Colonic mucosa (tissue), 4 donors: ENCODE measurements at regions of chr11 and their contacts with region 1.

Region 1: GRCh38 chr11:123301696-123302400 is 106.8 kb upstream of the CLMP start:
- DNase-seq: peak; percentile 46
- H3K4me3 ChIP-seq: peak overlapping the region; percentile 37
- H3K27ac ChIP-seq: no peak overlapping the region
- H3K4me1 ChIP-seq: no peaks in the 10 kb centered on the region
- H3K27me3 ChIP-seq: peaks cover 6% of the 10 kb centered on the region
- CTCF ChIP-seq: peak; percentile 90

Region 2: GRCh38 chr11:122697636-122698167 is 604.1 kb before region 1 on chr11:
- intact Hi-C with region 1: loop called (anchors 10 kb)
- DNase-seq: no peak
- H3K4me3 ChIP-seq: no peak overlapping the region
- H3K27ac ChIP-seq: no peak overlapping the region
- H3K4me1 ChIP-seq: no peaks in the 10 kb centered on the region
- H3K27me3 ChIP-seq: no peaks in the 10 kb centered on the region
- CTCF ChIP-seq: no peak

Region 3: GRCh38 chr11:123235117-123235655 is 66.7 kb before region 1 on chr11:
- intact Hi-C with region 1: no loop called
- DNase-seq: peak; percentile 45
- H3K4me3 ChIP-seq: no peak overlapping the region
- H3K27ac ChIP-seq: no peak overlapping the region
- H3K4me1 ChIP-seq: no peaks in the 10 kb centered on the region
- H3K27me3 ChIP-seq: no peaks in the 10 kb centered on the region
- CTCF ChIP-seq: peak; percentile 27